Activated naive CD8-positive, alpha-beta T cell treated with anti-CD3 and anti-CD28 coated beads, Interleukin-2, amount 10 ng/mL, durations not matched to agents 7 days and 5 days (primary cell): ENCODE measurements at regions of chr10 and their contacts with region 1.

Region 1: DNA sequence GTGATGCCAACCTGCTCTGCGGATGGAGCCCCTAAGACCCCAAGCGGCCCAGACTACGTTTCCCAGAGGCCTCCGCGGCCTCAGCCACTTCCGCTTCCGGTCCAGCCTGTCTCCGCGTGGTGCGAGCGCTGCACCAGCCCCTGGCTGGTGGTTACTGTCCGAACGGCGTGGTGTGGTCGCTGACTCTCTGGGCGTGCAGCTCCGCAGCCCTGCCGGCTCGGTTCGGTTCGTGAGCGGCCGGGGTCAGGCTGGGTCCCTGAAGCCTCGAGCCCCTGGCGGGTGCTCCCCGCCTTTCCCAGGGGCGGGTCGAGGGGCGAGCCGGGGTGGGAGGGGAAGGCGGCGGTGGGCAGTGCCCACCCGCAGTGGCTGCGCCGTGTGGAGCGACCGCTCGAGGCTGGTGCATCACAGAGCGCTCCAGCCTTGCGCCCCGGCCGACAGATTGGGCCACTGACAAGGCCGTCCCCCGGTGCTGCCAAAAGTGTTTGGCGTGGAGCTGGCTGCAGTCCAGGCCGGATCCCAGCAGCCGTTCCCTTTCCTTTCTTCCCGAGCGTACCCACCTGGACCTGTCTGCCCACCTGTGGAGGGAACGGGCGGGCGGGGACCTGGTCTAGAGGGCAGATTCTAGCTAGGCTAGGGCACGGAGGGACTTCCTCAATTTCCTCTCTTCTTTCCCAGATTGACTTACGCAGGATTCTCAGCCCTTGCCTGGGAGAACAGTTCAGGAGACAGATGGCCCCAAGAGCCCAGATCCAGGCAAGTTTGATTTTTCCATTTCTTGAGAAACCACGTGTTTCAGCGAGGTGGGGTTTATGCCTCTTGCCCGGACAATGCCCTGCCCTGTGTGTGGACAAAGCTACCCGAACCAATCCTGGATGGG is at the start of gene ZNF485:
- DNase-seq: peak; percentile 76
- ATAC-seq: peak; percentile 86
- H3K4me3 Mint-ChIP-seq: peak within 1 kb of the TSS; percentile 81
- H3K27ac Mint-ChIP-seq: peak within 1 kb of the TSS; percentile 76
- H3K4me1 Mint-ChIP-seq: peaks cover 13% of the 10 kb centered on the region
- H3K27me3 Mint-ChIP-seq: no peaks in the 10 kb centered on the region
- total RNA-seq, gene ZNF485: 6.5 to 6.6 TPM

Region 2: DNA sequence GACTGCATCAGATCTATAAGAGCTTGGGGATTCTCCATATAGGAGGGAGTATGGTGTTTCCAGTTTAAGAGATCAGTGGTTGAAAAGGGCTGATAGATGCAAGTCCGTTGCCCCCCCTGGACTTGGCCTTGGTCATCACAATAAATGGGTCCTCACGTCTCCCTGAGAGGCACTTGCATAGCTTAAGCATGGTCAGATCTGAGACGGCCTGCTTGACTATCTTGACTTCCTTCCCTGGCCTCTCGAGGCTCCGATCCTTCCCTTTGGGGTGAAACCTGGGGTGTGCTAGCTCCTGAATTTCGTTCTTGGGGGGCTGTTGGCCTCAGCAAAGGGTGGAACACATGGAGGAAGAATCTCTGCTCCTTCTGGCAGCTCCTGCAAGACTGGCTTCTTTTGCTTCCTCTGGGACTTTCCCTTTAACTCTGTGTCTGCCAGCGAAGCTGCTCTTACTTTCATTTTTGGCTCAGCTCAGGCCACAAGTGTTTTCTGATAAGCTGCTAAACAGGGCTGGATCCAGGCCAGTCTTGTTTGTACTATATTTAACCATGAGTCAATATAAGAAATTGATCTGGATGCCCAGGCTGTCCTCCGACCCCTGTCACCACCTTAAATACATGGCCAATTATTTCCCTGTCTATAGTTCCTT is 11.5 kb before region 1 on chr10:
- POLR2A ChIA-PET with region 1: interaction called, 10 read pairs
- DNase-seq: peak; percentile 39
- ATAC-seq: peak; percentile 87
- H3K4me3 Mint-ChIP-seq: peak overlapping the region; percentile 67
- H3K27ac Mint-ChIP-seq: peak overlapping the region; percentile 92
- H3K4me1 Mint-ChIP-seq: peaks cover 28% of the 10 kb centered on the region
- H3K27me3 Mint-ChIP-seq: no peaks in the 10 kb centered on the region